ENCODE measurements at regions of chr4 and their contacts with region 1.

Region 1: DNA sequence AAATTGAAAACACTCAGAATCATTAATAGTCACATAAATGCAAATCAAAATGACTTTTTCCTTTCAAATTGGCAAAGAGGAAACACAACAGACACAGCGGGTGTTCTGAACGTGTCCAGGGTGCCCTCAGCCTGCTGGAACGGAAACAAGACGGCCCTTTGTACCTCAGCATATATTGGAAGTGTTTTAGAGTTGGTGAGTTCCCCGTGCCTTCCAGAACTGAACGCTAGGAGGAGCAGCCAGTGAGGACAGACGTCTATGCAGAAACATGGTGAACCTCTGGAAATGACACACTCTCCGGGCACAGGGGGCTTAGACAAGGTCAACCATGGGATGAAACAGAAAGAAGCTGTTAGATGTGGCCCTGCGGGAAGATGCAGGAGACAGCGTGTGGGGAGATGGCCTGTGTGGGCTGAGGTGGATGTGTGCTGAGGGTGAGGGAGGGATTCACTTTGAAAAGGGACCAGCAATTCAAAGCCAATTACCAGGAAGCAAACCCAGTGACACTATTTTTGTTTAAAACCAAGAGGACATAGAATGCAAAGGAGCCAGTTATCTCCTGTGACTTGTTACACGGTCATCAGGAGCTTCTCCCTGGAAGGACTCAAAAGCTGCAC is 40.4 kb downstream of the RNF212 start:
- DNase-seq: peak in 1 of 2 experiments; percentile 67
- H3K4me3 ChIP-seq: no peak overlapping the region
- H3K27ac ChIP-seq: no peak overlapping the region
- H3K4me1 ChIP-seq: no peaks in the 10 kb centered on the region
- H3K27me3 ChIP-seq: no peaks in the 10 kb centered on the region
- CTCF ChIP-seq: peak; percentile 53 to 84 (median 70)
- EP300 ChIP-seq: no peak
- POLR2A ChIP-seq: no peak
- RAD21 ChIP-seq: peak; percentile 35 to 57; a peak in 3 of 4 replicates

Region 2: GRCh38 chr4:1058198-1058996 is 14.5 kb before region 1 on chr4:
- CTCF ChIA-PET with region 1: interaction called, 12 read pairs
- POLR2A ChIA-PET with region 1: no interaction called
- DNase-seq: no peak
- H3K4me3 ChIP-seq: no peak overlapping the region
- H3K27ac ChIP-seq: no peak overlapping the region
- H3K4me1 ChIP-seq: peaks cover 0 to 7% (median 4%) of the 10 kb centered on the region in 4 experiments; a peak in 2 of 7 replicates
- H3K27me3 ChIP-seq: peaks cover 0 to 10% (median 9%) of the 10 kb centered on the region in 4 experiments; a peak in 6 of 7 replicates
- CTCF ChIP-seq: no peak
- EP300 ChIP-seq: no peak
- POLR2A ChIP-seq: no peak
- RAD21 ChIP-seq: no peak

Region 3: DNA sequence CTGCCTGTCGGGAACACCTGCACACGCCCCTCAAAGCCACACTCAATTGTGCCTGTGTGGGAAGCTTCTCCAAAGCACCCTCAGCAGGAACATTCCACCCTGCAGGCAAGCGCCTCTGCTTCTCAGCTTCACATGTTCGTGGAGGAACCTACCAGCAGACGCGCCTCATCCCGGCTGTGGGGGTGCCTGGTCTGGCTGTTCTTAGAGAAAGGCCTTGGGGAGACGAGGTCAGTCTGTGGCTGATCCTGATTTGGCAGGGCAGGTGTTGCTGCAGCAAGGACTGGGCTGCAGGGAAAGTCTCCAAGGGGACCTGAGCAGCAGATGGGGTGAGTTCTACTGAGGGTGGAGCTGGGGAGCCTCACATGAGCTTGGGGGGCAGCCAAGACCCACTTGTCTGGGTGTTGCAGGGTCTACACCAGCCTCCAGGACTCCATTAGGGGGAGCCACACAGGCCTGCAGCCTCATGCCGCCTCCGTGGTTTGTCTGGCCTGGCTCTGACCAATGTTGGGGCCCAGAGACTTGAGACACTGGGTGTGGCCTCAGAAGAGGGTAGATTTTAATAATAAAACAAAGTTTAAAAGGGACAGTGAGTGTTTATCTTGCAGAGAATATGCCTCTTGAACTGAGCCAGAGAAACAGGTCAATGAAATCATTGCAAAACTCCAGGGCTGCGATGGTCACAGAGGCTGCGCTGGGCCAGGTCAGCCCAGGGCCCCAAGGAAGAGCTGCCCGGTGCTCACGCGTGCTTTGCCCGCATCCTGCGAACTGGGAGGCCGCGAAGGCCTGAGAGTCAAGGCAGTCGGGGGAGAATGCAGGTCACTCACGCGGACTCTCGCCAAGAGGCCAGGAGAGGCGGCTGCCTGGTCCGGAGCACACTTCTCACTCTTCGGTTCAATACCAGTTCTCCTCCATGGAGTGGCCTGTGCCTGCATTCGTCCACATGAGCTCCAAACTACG is 19.4 kb after region 1 on chr4:
- CTCF ChIA-PET with region 1: interaction called, 19 read pairs
- POLR2A ChIA-PET with region 1: no interaction called
- DNase-seq: peak in 1 of 2 experiments; percentile 57
- H3K4me3 ChIP-seq: no peak overlapping the region
- H3K27ac ChIP-seq: no peak overlapping the region
- H3K4me1 ChIP-seq: no peaks in the 10 kb centered on the region; a peak in 1 of 7 replicates
- H3K27me3 ChIP-seq: no peaks in the 10 kb centered on the region
- CTCF ChIP-seq: peak in 2 of 3 experiments; percentile 57 to 67; a peak in 3 of 4 replicates
- EP300 ChIP-seq: no peak
- POLR2A ChIP-seq: no peak
- RAD21 ChIP-seq: peak; percentile 16 to 53; a peak in 3 of 4 replicates